PC-9 (cell line): ENCODE measurements at regions of chr7 and their contacts with region 1.

Region 1: GRCh38 chr7:157404845-157405481 is 68.2 kb downstream of the DNAJB6 start:
- DNase-seq: peak; percentile 82 to 98
- H3K4me3 ChIP-seq: no peak overlapping the region
- H3K27ac ChIP-seq: peak overlapping the region; percentile 37
- H3K4me1 ChIP-seq: peaks cover 10% of the 10 kb centered on the region
- H3K27me3 ChIP-seq: no peaks in the 10 kb centered on the region
- CTCF ChIP-seq: no peak

Region 2: GRCh38 chr7:157394246-157395191 is 10.4 kb before region 1 on chr7:
- CTCF ChIA-PET with region 1: no interaction called
- POLR2A ChIA-PET with region 1: interaction called, 19 read pairs
- intact Hi-C with region 1: no loop called
- DNase-seq: no peak
- H3K4me3 ChIP-seq: no peak overlapping the region
- H3K27ac ChIP-seq: no peak overlapping the region
- H3K4me1 ChIP-seq: no peaks in the 10 kb centered on the region
- H3K27me3 ChIP-seq: no peaks in the 10 kb centered on the region
- CTCF ChIP-seq: no peak

Region 3: DNA sequence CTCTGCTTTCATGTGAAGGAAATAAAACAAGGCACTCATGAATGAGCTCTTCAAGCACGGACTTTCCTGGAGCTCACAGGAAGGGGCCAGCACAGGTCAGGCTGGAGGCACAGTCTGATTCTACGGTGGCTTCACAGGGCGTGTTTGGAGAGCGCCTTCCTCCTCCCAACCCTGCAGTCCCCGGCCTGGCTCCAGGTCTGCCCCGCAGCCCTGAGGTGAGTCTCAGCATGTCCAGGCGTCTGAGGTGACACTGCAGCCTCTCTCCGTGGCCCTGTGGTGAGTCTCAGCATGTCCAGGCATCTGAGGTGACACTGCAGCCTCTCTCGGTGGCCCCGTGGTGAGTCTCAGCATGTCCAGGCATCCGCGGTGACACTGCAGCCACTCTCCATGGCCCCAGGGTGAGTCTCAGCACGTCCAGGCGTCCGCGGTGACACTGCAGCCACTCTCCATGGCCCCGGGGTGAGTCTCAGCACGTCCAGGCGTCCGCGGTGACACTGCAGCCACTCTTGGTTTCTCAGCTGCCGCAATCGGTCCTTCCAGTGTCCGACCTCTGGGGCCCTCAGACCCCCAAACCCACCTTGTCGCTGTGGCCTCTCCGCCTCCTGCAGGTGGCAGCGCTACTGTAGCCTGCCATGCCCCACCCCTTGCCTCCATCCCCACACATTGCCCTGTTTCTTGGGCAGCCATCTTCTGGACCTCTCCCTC is 313.5 kb after region 1 on chr7:
- CTCF ChIA-PET with region 1: no interaction called
- POLR2A ChIA-PET with region 1: no interaction called
- intact Hi-C with region 1: no loop called
- DNase-seq: no peak
- H3K4me3 ChIP-seq: no peak overlapping the region
- H3K27ac ChIP-seq: no peak overlapping the region
- H3K4me1 ChIP-seq: no peaks in the 10 kb centered on the region
- H3K27me3 ChIP-seq: peaks cover 92% of the 10 kb centered on the region
- CTCF ChIP-seq: no peak